ENCODE measurements at regions of chr11 and their contacts with region 1.

Region 1: DNA sequence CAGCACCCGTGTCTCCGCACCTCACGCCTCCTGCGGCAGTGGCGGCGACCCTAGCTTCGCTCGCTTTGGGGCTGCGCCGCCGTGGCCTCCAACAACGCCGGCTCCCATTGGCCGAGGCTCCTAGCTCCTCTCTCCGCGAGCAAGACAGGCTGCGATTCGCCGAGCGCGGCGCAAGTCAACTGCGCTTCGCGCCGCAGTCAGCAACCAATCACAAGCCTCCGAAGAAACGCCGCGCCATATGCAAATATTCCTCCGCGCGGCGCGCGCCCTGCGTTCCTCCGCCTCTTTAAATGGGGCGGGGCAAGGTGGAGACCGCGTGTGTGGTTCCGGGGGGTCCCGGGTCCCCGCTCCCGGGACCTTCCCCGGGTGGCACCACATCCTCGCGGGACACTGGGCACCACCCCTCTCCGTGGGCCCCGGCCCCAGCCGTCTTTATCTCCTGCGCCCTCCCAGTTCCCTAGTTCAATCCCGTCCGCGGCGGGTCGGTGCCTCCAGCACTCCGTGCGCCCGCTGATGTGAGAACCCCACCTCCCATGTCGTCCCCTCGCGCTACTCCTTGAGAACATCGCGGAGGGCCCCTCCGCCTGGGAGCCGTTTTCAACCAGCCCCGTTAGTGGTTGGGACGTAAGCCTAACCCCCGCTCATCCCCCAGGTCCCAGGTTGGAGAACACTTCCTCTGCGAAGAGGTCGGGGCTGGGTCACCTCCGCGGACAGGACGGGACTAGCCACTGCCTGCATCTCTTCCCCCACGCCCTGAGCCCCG is at the start of gene NAP1L4:
- DNase-seq: peak; percentile 98
- ATAC-seq: peak; percentile 81
- H3K4me3 Mint-ChIP-seq: peak within 1 kb of the TSS; percentile 94
- H3K27ac Mint-ChIP-seq: peak within 1 kb of the TSS; percentile 99
- H3K4me1 Mint-ChIP-seq: peaks cover 26% of the 10 kb centered on the region
- H3K27me3 Mint-ChIP-seq: no peaks in the 10 kb centered on the region
- CTCF ChIP-seq: no peak
- total RNA-seq, gene NAP1L4: 212 to 223 TPM

Region 2: GRCh38 chr11:2901854-2902783 is 90.3 kb before region 1 on chr11:
- CTCF ChIA-PET with region 1: no interaction called
- POLR2A ChIA-PET with region 1: no interaction called
- intact Hi-C with region 1: no loop called
- DNase-seq: peak; percentile 97
- ATAC-seq: peak; percentile 93
- H3K4me3 Mint-ChIP-seq: peak overlapping the region; percentile 66
- H3K27ac Mint-ChIP-seq: no peak overlapping the region
- H3K4me1 Mint-ChIP-seq: peaks cover 29% of the 10 kb centered on the region
- H3K27me3 Mint-ChIP-seq: no peaks in the 10 kb centered on the region
- CTCF ChIP-seq: no peak

Region 3: GRCh38 chr11:2930704-2931428 is 61.5 kb before region 1 on chr11:
- CTCF ChIA-PET with region 1: interaction called, 10 read pairs
- POLR2A ChIA-PET with region 1: interaction called, 3 read pairs
- intact Hi-C with region 1: no loop called
- DNase-seq: peak; percentile 68
- ATAC-seq: peak; percentile 17
- H3K4me3 Mint-ChIP-seq: peak overlapping the region; percentile 75
- H3K27ac Mint-ChIP-seq: peak overlapping the region; percentile 47
- H3K4me1 Mint-ChIP-seq: peaks cover 25% of the 10 kb centered on the region
- H3K27me3 Mint-ChIP-seq: peaks cover 25% of the 10 kb centered on the region
- CTCF ChIP-seq: peak; percentile 78

Region 4: GRCh38 chr11:2975594-2975993 is 16.8 kb before region 1 on chr11:
- CTCF ChIA-PET with region 1: interaction called, 33 read pairs
- POLR2A ChIA-PET with region 1: interaction called, 37 read pairs
- intact Hi-C with region 1: no loop called
- DNase-seq: peak; percentile 57
- ATAC-seq: peak; percentile 94
- H3K4me3 Mint-ChIP-seq: no peak overlapping the region
- H3K27ac Mint-ChIP-seq: peak overlapping the region; percentile 8
- H3K4me1 Mint-ChIP-seq: peaks cover 44% of the 10 kb centered on the region
- H3K27me3 Mint-ChIP-seq: no peaks in the 10 kb centered on the region
- CTCF ChIP-seq: peak; percentile 59

Region 5: GRCh38 chr11:2982214-2982613 is 10.2 kb before region 1 on chr11:
- CTCF ChIA-PET with region 1: interaction called, 3 read pairs
- POLR2A ChIA-PET with region 1: interaction called, 37 read pairs
- intact Hi-C with region 1: no loop called
- DNase-seq: no peak
- ATAC-seq: peak; percentile 18
- H3K4me3 Mint-ChIP-seq: no peak overlapping the region
- H3K27ac Mint-ChIP-seq: peak overlapping the region; percentile 50
- H3K4me1 Mint-ChIP-seq: peaks cover 58% of the 10 kb centered on the region
- H3K27me3 Mint-ChIP-seq: no peaks in the 10 kb centered on the region
- CTCF ChIP-seq: no peak

Region 6: DNA sequence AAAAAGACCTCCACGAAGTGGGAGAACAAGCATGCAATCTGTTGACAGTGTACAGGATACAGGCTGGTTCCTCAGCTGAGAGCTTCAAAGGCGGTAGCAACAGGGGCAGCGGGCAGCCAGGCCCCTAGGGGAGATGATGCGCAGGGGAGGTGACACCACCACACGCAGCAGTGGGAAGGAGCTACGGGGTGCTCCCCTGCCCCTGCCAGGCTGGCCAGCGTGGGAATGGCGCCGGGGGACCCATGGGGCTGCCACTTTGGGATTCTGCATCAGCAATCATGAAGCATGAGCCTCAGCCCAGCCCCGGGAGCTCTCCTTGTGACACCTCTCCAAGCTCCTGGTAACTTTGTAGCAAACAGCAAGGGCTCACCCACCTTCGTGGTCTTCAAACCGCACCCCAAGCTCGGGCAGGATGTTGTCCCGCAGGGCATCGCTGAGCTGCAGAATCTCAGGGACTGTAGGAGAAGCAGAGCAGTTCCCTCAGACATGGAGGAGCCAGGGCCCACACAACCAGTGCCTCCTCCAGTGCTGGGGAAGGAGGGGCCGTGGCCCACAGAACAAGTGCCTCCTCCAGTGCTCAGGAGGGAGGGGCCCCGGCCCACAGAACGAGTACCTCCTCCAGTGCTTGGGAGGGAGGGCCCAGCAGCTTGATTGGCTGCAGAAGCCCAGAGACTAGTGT is 14.2 kb after region 1 on chr11:
- CTCF ChIA-PET with region 1: interaction called, 27 read pairs
- POLR2A ChIA-PET with region 1: interaction called, 79 read pairs
- intact Hi-C with region 1: no loop called
- DNase-seq: peak; percentile 71
- ATAC-seq: peak; percentile 93
- H3K4me3 Mint-ChIP-seq: peak overlapping the region; percentile 63
- H3K27ac Mint-ChIP-seq: peak overlapping the region; percentile 76
- H3K4me1 Mint-ChIP-seq: peaks cover 46% of the 10 kb centered on the region
- H3K27me3 Mint-ChIP-seq: no peaks in the 10 kb centered on the region
- CTCF ChIP-seq: no peak

Region 7: DNA sequence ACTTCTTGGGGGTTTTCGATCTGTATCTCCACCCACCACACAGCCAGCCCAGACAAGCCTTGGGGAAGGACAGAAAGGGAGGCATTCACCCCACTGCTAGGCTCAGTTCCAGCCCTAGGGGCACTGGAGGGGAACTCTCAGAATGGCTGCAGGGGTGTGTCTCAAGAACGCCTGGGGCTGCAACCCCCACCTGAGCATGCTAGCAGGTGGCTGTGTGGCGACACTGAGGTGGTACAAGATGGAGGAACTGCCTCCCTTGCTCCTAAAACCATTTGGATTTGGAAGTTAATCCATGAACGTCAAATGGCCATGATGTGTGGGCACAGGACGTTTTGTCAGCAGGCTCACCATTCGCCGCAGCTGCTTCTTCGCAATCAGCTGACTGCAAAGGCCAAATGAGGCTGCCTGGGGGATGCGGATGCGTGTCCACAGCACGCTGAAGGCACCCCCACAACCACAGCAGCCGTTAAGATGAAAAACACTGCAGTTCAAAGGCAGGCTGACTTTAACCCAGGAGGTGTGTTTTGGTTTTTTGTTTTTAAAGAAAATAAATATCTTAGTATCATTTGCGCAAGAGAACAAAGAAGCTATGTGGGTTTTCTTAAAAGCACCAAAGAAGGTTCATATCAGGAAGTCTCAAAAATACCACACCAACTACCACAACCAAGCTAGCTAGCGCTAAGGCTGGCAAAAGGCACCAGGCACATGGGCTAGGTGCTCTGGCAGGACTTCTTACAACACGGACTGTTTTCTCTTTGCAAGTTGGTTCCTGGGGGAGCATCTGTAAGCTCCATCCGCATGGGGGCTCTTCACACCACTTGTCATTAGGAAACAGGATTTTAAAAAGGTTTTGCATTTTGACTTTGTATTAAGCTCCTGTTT is 21.9 kb after region 1 on chr11:
- CTCF ChIA-PET with region 1: interaction called, 27 read pairs
- POLR2A ChIA-PET with region 1: interaction called, 79 read pairs
- intact Hi-C with region 1: loop called (anchors 2 kb)
- DNase-seq: peak; percentile 92
- ATAC-seq: peak; percentile 79
- H3K4me3 Mint-ChIP-seq: peak overlapping the region; percentile 31
- H3K27ac Mint-ChIP-seq: peak overlapping the region; percentile 91
- H3K4me1 Mint-ChIP-seq: peaks cover 70% of the 10 kb centered on the region
- H3K27me3 Mint-ChIP-seq: no peaks in the 10 kb centered on the region
- CTCF ChIP-seq: peak; percentile 23

Region 8: DNA sequence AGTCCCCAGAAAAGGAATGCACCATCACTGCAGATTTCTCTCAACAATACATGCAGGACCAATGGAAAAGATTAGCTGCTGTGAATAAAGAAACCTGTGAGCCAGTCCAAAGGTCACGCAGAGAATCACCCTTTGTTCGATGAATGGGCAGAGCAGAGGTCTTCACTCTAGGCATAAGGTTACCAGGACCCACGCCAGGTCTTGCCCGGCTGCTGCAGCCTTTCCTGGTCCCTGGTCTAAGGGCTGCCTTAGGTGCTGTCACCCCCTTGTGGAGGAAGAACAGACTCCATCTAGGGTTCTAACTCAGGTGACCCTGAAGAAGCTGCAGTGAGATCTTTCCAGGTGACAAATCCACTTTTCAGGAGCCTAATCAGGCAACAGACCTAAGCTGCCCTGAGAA is 28.7 kb after region 1 on chr11:
- CTCF ChIA-PET with region 1: interaction called, 27 read pairs
- POLR2A ChIA-PET with region 1: interaction called, 6 read pairs
- intact Hi-C with region 1: no loop called
- DNase-seq: peak; percentile 55
- ATAC-seq: peak; percentile 47
- H3K4me3 Mint-ChIP-seq: no peak overlapping the region
- H3K27ac Mint-ChIP-seq: no peak overlapping the region
- H3K4me1 Mint-ChIP-seq: peaks cover 56% of the 10 kb centered on the region
- H3K27me3 Mint-ChIP-seq: no peaks in the 10 kb centered on the region
- CTCF ChIP-seq: peak; percentile 54

Measured in activated CD8-positive, alpha-beta T cell treated with anti-CD3 and anti-CD28 coated beads for 36 hours (primary cell).